ENCODE measurements at regions of chr2 and their contacts with region 1.

Region 1: GRCh38 chr2:110105608-110106467 is 9.8 kb downstream of the MALL start:
- DNase-seq: peak; percentile 84
- H3K4me3 Mint-ChIP-seq: peak overlapping the region; percentile 48
- H3K27ac Mint-ChIP-seq: peak overlapping the region; percentile 98
- H3K4me1 Mint-ChIP-seq: peaks cover 95% of the 10 kb centered on the region
- H3K27me3 Mint-ChIP-seq: no peaks in the 10 kb centered on the region
- CTCF ChIP-seq: no peak

Region 2: GRCh38 chr2:110116033-110116710 is 10.3 kb after region 1 on chr2:
- CTCF ChIA-PET with region 1: interaction called, 34 read pairs
- intact Hi-C with region 1: no loop called
- DNase-seq: peak; percentile 67
- H3K4me3 Mint-ChIP-seq: peak overlapping the region; percentile 84
- H3K27ac Mint-ChIP-seq: peak overlapping the region; percentile 87
- H3K4me1 Mint-ChIP-seq: peaks cover 42% of the 10 kb centered on the region
- H3K27me3 Mint-ChIP-seq: no peaks in the 10 kb centered on the region
- CTCF ChIP-seq: peak; percentile 61

Region 3: DNA sequence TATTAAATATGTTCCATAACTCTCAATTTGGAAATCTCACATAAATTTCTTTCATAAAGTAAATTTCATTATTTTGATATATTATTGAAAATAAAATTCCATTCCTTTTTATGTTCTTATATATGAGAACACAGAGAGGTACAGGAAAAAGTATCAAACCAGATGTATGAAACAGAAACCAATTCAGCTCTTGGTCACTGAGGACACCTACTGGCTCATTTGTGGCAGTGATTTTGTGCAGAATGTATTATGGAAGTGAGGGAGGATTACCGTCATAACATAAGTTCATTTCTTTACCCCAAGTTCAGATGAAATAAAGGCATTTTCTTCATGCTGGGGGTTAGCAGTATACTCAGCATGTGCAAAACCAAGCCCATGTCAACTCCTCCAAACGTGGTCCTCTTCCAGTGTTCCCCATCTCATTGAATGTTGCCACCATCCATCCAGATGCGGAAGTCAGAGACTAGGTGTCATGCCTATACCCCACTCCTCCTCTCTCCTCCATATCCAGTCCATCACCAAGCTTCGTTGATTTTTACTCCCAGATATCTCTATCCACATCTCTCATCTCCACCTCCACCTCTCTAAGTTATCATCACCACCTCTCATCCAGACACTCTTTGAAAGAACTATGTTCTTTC is 51.4 kb after region 1 on chr2:
- CTCF ChIA-PET with region 1: no interaction called
- intact Hi-C with region 1: loop called (anchors 2 kb)
- DNase-seq: peak; percentile 22
- H3K4me3 Mint-ChIP-seq: no peak overlapping the region
- H3K27ac Mint-ChIP-seq: no peak overlapping the region
- H3K4me1 Mint-ChIP-seq: peaks cover 8% of the 10 kb centered on the region
- H3K27me3 Mint-ChIP-seq: no peaks in the 10 kb centered on the region
- CTCF ChIP-seq: peak; percentile 65